PC-9 (cell line): ENCODE measurements at regions of chr3 and their contacts with region 1.

Region 1: GRCh38 chr3:56874269-56874668 is 72.5 kb upstream of the ARHGEF3 start:
- DNase-seq: no peak
- H3K4me3 ChIP-seq: no peak overlapping the region
- H3K27ac ChIP-seq: no peak overlapping the region
- H3K4me1 ChIP-seq: peaks cover 23% of the 10 kb centered on the region
- H3K27me3 ChIP-seq: no peaks in the 10 kb centered on the region
- CTCF ChIP-seq: no peak

Region 2: GRCh38 chr3:56862352-56863074 is 11.8 kb before region 1 on chr3:
- CTCF ChIA-PET with region 1: no interaction called
- POLR2A ChIA-PET with region 1: interaction called, 11 read pairs
- intact Hi-C with region 1: no loop called
- DNase-seq: peak in 1 of 2 experiments; percentile 72
- H3K4me3 ChIP-seq: no peak overlapping the region
- H3K27ac ChIP-seq: peak overlapping the region; percentile 17; the same call in 1 of the 2 replicates
- H3K4me1 ChIP-seq: peaks cover 11% of the 10 kb centered on the region
- H3K27me3 ChIP-seq: no peaks in the 10 kb centered on the region
- CTCF ChIP-seq: no peak

Region 3: GRCh38 chr3:56904552-56905215 is 30.4 kb after region 1 on chr3:
- CTCF ChIA-PET with region 1: no interaction called
- POLR2A ChIA-PET with region 1: no interaction called
- intact Hi-C with region 1: no loop called
- DNase-seq: no peak
- H3K4me3 ChIP-seq: no peak overlapping the region
- H3K27ac ChIP-seq: no peak overlapping the region
- H3K4me1 ChIP-seq: no peaks in the 10 kb centered on the region
- H3K27me3 ChIP-seq: no peaks in the 10 kb centered on the region
- CTCF ChIP-seq: no peak